GM12878 (cell line): ENCODE measurements at regions of chr3 and their contacts with region 1.

Region 1: GRCh38 chr3:195271116-195271858 is at the start of gene XXYLT1:
- DNase-seq: no peak
- ATAC-seq: peak; percentile 95
- H3K4me3 ChIP-seq: peak within 1 kb of the TSS; percentile 85
- H3K27ac ChIP-seq: peak within 1 kb of the TSS; percentile 64
- H3K4me1 ChIP-seq: peaks cover 10% of the 10 kb centered on the region; the same call in 1 of the 2 replicates
- H3K27me3 ChIP-seq: no peaks in the 10 kb centered on the region
- CTCF ChIP-seq: peak; percentile 84 to 99 (median 91); a peak in 5 of 6 replicates
- EP300 ChIP-seq: no peak
- POLR2A ChIP-seq: no peak; the same call in 1 of the 2 replicates
- RAD21 ChIP-seq: peak; percentile 82
- polyA plus RNA-seq, gene XXYLT1: 1.2 to 3.2 TPM

Region 2: DNA sequence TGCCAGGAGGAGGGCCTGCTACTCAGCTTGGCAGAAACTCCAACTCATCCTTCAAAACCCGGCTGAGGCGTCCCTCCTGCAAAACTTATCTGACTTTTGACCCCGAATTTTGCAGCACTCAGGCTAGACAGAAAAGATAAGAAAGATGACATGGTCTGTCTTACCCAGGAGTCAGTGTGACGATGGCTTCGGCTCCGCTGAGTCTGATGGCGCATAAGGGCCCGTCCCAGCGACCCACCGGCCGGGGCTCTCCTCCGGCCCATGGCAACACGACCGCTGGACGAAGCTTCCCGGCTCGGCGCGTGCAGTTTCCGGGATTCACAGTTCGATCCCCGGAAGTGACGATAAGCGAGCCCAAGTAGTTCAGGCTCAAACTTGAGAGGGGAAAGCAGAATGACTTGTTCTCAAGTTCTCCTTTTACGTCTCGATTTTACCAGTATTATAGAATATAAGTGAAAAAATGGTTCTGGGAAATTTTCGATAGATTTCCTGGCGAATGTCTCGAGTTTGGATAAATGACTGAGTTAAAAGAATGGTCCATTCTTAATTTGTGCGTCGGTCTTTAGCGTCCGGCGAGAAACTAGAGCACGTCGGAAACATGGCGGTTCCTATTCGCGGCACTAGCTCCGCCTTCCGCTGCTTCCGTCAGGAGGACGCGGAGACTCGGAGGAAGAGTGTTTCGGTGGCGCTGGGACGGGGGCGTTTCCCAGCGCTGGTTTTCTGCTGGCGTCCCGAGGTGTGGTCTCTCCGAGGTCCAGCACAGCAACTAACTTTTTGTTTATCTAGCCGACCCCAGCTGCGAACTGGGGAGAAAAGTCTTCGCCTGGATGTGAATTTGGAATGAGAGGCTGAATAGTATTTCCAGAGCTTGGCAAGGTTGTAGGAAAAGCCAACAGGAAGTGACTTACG is 599.1 kb before region 1 on chr3 and contains the start of gene LSG1:
- CTCF ChIA-PET with region 1: interaction called, 45 read pairs
- POLR2A ChIA-PET with region 1: interaction called, 6 read pairs
- RAD21 ChIA-PET with region 1: interaction called, 29 read pairs
- SMC1A ChIA-PET with region 1: interaction called, 9 read pairs
- in situ Hi-C with region 1: loop called (anchors 5 kb)
- intact Hi-C with region 1: no loop called
- DNase-seq: peak; percentile 76
- ATAC-seq: peak; percentile 94
- H3K4me3 ChIP-seq: peak within 1 kb of the TSS; percentile 93
- H3K27ac ChIP-seq: peak within 1 kb of the TSS; percentile 96
- H3K4me1 ChIP-seq: peaks cover 21% of the 10 kb centered on the region
- H3K27me3 ChIP-seq: no peaks in the 10 kb centered on the region
- CTCF ChIP-seq: no peak
- EP300 ChIP-seq: no peak
- POLR2A ChIP-seq: peak; percentile 79
- RAD21 ChIP-seq: no peak
- polyA plus RNA-seq, gene LSG1: 14.3 to 23.5 TPM

Region 3: GRCh38 chr3:195259475-195260279 is 11.6 kb before region 1 on chr3:
- CTCF ChIA-PET with region 1: interaction called, 47 read pairs
- POLR2A ChIA-PET with region 1: interaction called, 7 read pairs
- RAD21 ChIA-PET with region 1: interaction called, 25 read pairs
- SMC1A ChIA-PET with region 1: interaction called, 6 read pairs
- in situ Hi-C with region 1: no loop called
- intact Hi-C with region 1: no loop called
- DNase-seq: peak; percentile 69
- ATAC-seq: peak; percentile 85
- H3K4me3 ChIP-seq: peak overlapping the region; percentile 77; the same call in 1 of the 2 replicates
- H3K27ac ChIP-seq: peak overlapping the region; percentile 85
- H3K4me1 ChIP-seq: peaks cover 21% of the 10 kb centered on the region
- H3K27me3 ChIP-seq: no peaks in the 10 kb centered on the region
- CTCF ChIP-seq: peak; percentile 54 to 77 (median 54); a peak in 5 of 6 replicates
- EP300 ChIP-seq: peak; percentile 64 to 82; a peak in 3 of 4 replicates
- POLR2A ChIP-seq: peak; percentile 85
- RAD21 ChIP-seq: peak; percentile 89

Region 4: DNA sequence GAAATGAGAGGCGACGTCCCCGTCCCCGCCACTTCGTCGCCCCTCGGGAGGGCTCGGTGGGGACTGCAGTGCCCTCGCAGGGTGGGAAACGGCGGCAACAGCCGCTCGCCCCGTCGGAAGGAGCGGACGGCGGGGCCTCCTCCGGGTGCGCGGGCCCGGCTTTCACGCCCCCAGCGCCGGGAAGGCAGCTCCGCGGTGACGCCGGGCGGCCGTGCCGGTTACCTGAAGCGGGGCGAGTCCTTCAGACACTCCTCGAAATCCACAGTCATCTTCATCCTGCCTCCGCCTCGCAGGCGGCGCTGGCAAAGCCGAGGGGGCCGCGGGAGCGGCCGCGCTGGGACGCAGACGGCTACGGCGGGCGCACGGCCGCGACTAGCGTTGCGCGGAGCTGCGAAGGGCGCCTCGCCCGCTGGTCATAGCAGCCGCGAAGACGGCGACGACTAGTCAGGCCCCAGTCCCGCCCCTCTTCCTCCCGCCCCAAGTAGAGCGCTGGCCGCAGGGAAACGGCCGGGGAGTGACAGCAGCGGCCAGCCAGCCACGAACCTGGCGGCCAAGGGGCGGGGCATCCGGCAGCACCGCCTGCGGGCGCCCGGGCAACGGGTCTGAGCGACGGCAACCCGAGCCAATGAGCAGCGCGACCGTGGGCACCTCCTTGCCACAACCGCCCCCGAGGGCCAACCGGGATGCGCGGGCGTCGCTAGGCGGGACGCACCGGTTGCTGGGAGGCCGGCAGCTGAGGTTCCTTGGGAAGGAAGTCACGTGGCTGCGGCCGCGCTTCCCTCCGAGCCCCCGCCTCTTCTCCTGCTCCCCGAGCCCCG is 171.5 kb after region 1 on chr3 and contains the start of gene ACAP2:
- CTCF ChIA-PET with region 1: interaction called, 51 read pairs
- POLR2A ChIA-PET with region 1: interaction called, 6 read pairs
- RAD21 ChIA-PET with region 1: interaction called, 49 read pairs
- SMC1A ChIA-PET with region 1: interaction called, 22 read pairs
- in situ Hi-C with region 1: no loop called
- intact Hi-C with region 1: loop called (anchors 2 kb)
- DNase-seq: peak; percentile 93
- ATAC-seq: peak; percentile 93
- H3K4me3 ChIP-seq: peak within 1 kb of the TSS; percentile 89
- H3K27ac ChIP-seq: peak within 1 kb of the TSS; percentile 82
- H3K4me1 ChIP-seq: peaks cover 7% of the 10 kb centered on the region
- H3K27me3 ChIP-seq: no peaks in the 10 kb centered on the region
- CTCF ChIP-seq: no peak
- EP300 ChIP-seq: no peak
- POLR2A ChIP-seq: peak; percentile 98
- RAD21 ChIP-seq: no peak
- polyA plus RNA-seq, gene ACAP2: 7.1 to 10.5 TPM

Region 5: DNA sequence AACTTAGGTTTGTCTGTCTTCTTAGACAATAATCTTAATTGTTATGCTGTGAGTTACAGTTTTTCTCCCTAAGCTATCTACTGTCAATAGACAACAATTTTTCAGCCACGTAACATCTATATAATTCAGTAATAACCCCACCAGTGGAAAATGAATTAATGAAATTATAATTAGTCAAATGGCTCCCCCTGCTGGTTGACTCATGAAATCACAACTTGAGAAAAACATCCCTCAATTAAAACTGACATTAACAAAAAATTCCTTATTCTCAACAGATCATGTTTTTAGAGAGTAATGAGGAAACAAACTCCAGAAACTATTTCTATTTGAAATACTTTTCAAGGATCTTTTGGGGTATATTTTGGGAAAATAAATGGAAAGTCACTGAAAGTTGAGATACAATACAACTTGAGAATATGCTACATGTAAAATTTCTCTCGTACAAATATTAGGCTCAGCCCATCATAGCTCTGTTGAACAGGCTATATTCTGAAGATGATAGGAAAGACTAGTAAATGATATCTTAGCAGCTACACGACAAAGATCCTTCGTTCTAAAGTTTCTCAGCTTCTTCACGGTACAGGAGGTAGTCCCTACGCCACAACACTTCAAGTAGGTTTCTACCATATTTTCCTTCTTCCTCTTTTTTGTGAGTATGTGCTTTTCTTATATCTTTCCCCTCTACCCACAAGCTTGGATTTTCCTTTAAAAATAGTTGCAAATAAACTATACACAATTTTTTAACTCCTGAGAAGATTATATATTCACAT is 251.2 kb after region 1 on chr3:
- CTCF ChIA-PET with region 1: interaction called, 179 read pairs
- POLR2A ChIA-PET with region 1: interaction called, 4 read pairs
- RAD21 ChIA-PET with region 1: interaction called, 84 read pairs
- SMC1A ChIA-PET with region 1: interaction called, 66 read pairs
- in situ Hi-C with region 1: loop called (anchors 10 kb)
- intact Hi-C with region 1: loop called (anchors 1 kb)
- DNase-seq: no peak
- ATAC-seq: peak; percentile 22; the same call in 2 of the 3 replicates
- H3K4me3 ChIP-seq: no peak overlapping the region
- H3K27ac ChIP-seq: no peak overlapping the region
- H3K4me1 ChIP-seq: no peaks in the 10 kb centered on the region
- H3K27me3 ChIP-seq: no peaks in the 10 kb centered on the region
- CTCF ChIP-seq: peak; percentile 27 to 65 (median 48); a peak in 5 of 6 replicates
- EP300 ChIP-seq: no peak
- POLR2A ChIP-seq: no peak
- RAD21 ChIP-seq: peak; percentile 69

Region 6: DNA sequence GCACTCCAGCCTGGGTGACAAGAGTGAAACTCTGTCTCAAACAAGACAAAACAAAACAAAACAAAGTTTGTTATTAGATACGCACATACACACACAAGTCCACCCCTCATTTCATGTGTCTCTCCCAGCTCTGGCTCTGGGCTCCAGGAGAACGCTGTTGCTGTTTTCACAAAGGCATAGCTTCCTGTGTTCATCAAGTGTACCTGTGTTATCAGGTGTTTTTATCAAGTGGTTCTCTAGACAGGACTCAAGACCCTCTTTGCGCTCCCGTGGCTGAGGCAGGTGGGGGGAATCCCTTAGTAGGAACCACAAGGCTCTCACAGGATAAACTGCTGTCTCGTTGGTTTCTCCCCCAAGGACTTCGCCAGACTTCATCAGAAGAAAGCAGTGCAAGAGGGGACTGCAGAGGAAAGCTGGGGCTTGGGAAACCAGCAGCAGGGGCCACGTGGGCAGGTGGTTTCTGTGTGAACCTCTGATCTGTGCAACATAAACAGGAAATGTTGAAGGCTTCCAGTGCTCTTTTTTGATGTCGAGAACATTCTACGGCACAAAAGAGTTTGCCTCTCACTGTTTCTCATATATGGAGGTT is 278.7 kb after region 1 on chr3:
- CTCF ChIA-PET with region 1: interaction called, 20 read pairs
- POLR2A ChIA-PET with region 1: no interaction called
- RAD21 ChIA-PET with region 1: interaction called, 9 read pairs
- SMC1A ChIA-PET with region 1: interaction called, 7 read pairs
- in situ Hi-C with region 1: no loop called
- intact Hi-C with region 1: no loop called
- DNase-seq: peak; percentile 61
- ATAC-seq: peak; percentile 87
- H3K4me3 ChIP-seq: 0 out of 2 replicates have a peak overlapping the region, but pooled peaks have one; percentile 31
- H3K27ac ChIP-seq: peak overlapping the region; percentile 49
- H3K4me1 ChIP-seq: peaks cover 23% of the 10 kb centered on the region
- H3K27me3 ChIP-seq: no peaks in the 10 kb centered on the region
- CTCF ChIP-seq: no peak
- EP300 ChIP-seq: peak; percentile 43 to 72; a peak in 1 of 4 replicates
- POLR2A ChIP-seq: 0 out of 2 replicates have a peak, but pooled peaks have one; percentile 19
- RAD21 ChIP-seq: no peak